ENCODE measurements at regions of chr4 and their contacts with region 1.

Region 1: GRCh38 chr4:2536193-2537010 is at the start of gene FAM193A:
- DNase-seq: peak; percentile 97
- ATAC-seq: peak; percentile 93
- H3K4me3 ChIP-seq: peak within 1 kb of the TSS; percentile 82
- H3K27ac ChIP-seq: peak within 1 kb of the TSS; percentile 70
- H3K4me1 ChIP-seq: peaks cover 7% of the 10 kb centered on the region; the same call in 1 of the 2 replicates
- H3K27me3 ChIP-seq: no peaks in the 10 kb centered on the region
- CTCF ChIP-seq: no peak
- total RNA-seq, gene FAM193A: 13.6 and 21.5 TPM in 2 replicates

Region 2: DNA sequence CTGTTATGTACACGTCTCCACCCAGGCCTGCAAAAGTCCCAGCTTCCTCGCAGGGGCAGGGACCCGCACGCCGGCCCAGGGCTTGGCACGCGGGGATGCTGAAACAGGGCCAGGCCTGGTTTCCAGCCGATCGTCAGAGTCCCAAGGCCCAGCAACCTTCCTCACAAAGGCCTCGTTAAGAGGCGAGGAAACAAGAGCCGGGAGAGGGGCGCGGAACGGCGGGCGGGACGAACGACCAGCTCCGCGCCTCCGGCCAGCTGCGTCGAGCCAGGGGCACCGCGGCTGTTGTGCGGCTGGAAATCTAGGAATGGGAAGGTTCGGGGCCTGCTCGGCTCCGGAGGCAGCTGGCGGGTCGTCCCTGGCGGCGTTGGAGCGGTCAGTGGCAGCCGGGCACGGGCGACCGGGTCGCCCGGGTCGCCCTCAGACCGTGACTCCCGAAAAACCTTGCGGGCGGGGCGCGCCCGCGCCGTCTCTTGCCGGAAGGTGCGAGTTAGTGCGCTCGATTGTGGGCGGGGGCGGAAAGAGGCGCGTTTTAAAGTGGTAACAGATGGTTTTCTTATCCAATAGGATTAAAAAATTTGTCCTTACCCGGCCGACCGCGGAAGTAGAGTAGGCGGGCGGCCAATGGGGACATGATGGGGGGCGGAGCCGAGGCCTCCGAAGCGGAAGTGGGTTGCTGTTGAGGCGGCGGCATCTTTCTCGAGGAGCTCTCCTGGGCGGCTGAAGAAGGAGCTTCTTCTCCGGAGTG is 67.8 kb before region 1 on chr4 and contains the start of gene RNF4:
- CTCF ChIA-PET with region 1: no interaction called
- POLR2A ChIA-PET with region 1: no interaction called
- intact Hi-C with region 1: loop called (anchors 5 kb)
- DNase-seq: peak; percentile 92
- ATAC-seq: peak; percentile 84
- H3K4me3 ChIP-seq: peak within 1 kb of the TSS; percentile 100
- H3K27ac ChIP-seq: peak within 1 kb of the TSS; percentile 48
- H3K4me1 ChIP-seq: peaks cover 19% of the 10 kb centered on the region; the same call in 1 of the 2 replicates
- H3K27me3 ChIP-seq: no peaks in the 10 kb centered on the region
- CTCF ChIP-seq: no peak
- total RNA-seq, gene RNF4: 27.4 and 30.4 TPM in 2 replicates

Region 3: GRCh38 chr4:2497931-2498330 is 38.5 kb before region 1 on chr4:
- CTCF ChIA-PET with region 1: no interaction called
- POLR2A ChIA-PET with region 1: no interaction called
- intact Hi-C with region 1: no loop called
- DNase-seq: no peak
- ATAC-seq: no peak
- H3K4me3 ChIP-seq: no peak overlapping the region
- H3K27ac ChIP-seq: no peak overlapping the region
- H3K4me1 ChIP-seq: no peaks in the 10 kb centered on the region
- H3K27me3 ChIP-seq: no peaks in the 10 kb centered on the region
- CTCF ChIP-seq: no peak